ENCODE measurements at regions of chr17 and their contacts with region 1.

Region 1: GRCh38 chr17:38557836-38558727 is 47.7 kb downstream of the SRCIN1 start:
- DNase-seq: peak; percentile 97
- H3K4me3 ChIP-seq: peak overlapping the region; percentile 35 to 55
- H3K27ac ChIP-seq: no peak overlapping the region; a peak in 1 of 4 replicates
- H3K4me1 ChIP-seq: peaks cover 0 to 30% of the 10 kb centered on the region in 2 experiments; a peak in 2 of 4 replicates
- H3K27me3 ChIP-seq: no peaks in the 10 kb centered on the region
- CTCF ChIP-seq: peak; percentile 84
- EP300 ChIP-seq: no peak; a peak in 1 of 4 replicates
- RAD21 ChIP-seq: peak; percentile 83

Region 2: DNA sequence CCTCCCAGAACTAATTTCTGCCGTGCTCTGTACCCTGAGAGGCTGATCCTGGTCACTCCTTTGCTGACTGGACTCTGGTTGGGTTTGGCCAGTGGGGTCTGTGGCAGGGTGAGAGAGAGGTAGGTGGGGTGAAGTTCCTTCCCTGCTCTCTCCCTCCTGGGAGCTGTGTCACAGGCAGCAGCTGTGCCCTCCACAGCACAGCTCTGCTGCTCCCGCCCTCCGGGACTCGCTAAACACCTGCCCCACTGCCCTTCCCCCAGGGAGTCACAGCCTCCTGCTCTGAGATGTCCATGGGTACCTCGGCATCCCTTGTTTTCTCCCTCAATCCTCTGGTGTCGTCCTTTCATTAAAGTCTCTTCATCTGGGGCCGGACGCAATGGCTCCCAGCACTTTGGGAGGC is 18.7 kb before region 1 on chr17:
- CTCF ChIA-PET with region 1: interaction called, 57 read pairs
- POLR2A ChIA-PET with region 1: no interaction called
- DNase-seq: no peak
- H3K4me3 ChIP-seq: no peak overlapping the region
- H3K27ac ChIP-seq: no peak overlapping the region
- H3K4me1 ChIP-seq: no peaks in the 10 kb centered on the region
- H3K27me3 ChIP-seq: no peaks in the 10 kb centered on the region
- CTCF ChIP-seq: no peak
- EP300 ChIP-seq: no peak
- RAD21 ChIP-seq: no peak

Region 3: DNA sequence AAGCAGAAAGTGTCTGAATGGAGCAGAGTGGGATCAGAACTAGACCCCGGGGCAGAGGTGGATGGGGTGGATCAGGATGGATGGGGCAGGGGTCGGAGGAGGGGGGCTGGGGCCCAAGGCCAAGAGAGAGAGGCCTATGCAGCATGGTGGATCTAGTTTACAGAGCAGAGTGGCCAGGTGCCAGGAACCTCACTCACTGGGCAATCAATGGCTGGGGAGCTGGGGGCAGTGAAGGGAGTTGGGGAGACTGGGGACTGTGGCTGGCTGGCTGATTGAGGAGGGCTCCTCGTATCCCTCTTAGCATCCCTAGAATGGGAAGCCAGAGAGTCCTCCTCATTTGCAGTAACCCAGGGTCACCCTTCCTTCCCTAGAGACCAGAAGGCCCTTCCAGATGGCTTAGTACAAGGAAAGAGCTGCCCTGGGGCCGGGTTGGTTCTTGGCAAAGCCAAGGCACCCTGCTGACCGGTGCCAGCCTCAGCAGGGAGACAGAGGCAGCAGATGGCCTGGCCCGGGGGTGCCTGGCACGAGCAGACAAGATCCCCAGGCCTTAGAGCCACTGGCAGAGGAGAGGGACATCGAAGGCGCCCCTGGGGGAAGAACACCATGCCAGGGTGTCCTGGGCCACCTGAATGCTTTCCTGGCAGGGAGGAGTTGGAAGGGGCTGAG is 10.9 kb after region 1 on chr17:
- CTCF ChIA-PET with region 1: interaction called, 30 read pairs
- POLR2A ChIA-PET with region 1: interaction called, 3 read pairs
- DNase-seq: peak; percentile 65
- H3K4me3 ChIP-seq: no peak overlapping the region
- H3K27ac ChIP-seq: peak overlapping the region in 1 of 2 experiments; percentile 11; a peak in 1 of 4 replicates
- H3K4me1 ChIP-seq: peaks cover 0 to 56% of the 10 kb centered on the region in 2 experiments; a peak in 2 of 4 replicates
- H3K27me3 ChIP-seq: peaks cover 31% of the 10 kb centered on the region
- CTCF ChIP-seq: no peak
- EP300 ChIP-seq: peak in 1 of 2 experiments; percentile 27; a peak in 1 of 4 replicates
- RAD21 ChIP-seq: no peak

Region 4: GRCh38 chr17:38584350-38584925 is 26.4 kb after region 1 on chr17:
- CTCF ChIA-PET with region 1: interaction called, 167 read pairs
- POLR2A ChIA-PET with region 1: interaction called, 6 read pairs
- DNase-seq: peak; percentile 86
- H3K4me3 ChIP-seq: peak overlapping the region in 1 of 2 experiments; percentile 21; a peak in 1 of 4 replicates
- H3K27ac ChIP-seq: no peak overlapping the region
- H3K4me1 ChIP-seq: peaks cover 5 to 45% of the 10 kb centered on the region in 2 experiments; a peak in 3 of 4 replicates
- H3K27me3 ChIP-seq: no peaks in the 10 kb centered on the region; the same call in none of the 2 replicates
- CTCF ChIP-seq: peak; percentile 97
- EP300 ChIP-seq: no peak
- RAD21 ChIP-seq: peak; percentile 81

Region 5: GRCh38 chr17:38605888-38606645 is 48.0 kb after region 1 on chr17 and contains the start of gene SRCIN1:
- CTCF ChIA-PET with region 1: interaction called, 88 read pairs
- POLR2A ChIA-PET with region 1: no interaction called
- DNase-seq: peak; percentile 92
- H3K4me3 ChIP-seq: peak within 1 kb of the TSS; percentile 60 to 63
- H3K27ac ChIP-seq: peak within 1 kb of the TSS in 1 of 2 experiments; percentile 83; a peak in 2 of 4 replicates
- H3K4me1 ChIP-seq: peaks cover 0 to 58% of the 10 kb centered on the region in 2 experiments; a peak in 1 of 4 replicates
- H3K27me3 ChIP-seq: no peaks in the 10 kb centered on the region; the same call in 1 of the 2 replicates
- CTCF ChIP-seq: peak; percentile 90
- EP300 ChIP-seq: no peak
- RAD21 ChIP-seq: peak; percentile 50
- polyA plus RNA-seq, gene SRCIN1: 0.45 and 1.0 TPM in 2 replicates

Region 6: GRCh38 chr17:38674749-38675615 is 116.9 kb after region 1 on chr17 and contains the start of gene EPOP:
- CTCF ChIA-PET with region 1: interaction called, 62 read pairs
- POLR2A ChIA-PET with region 1: no interaction called
- DNase-seq: peak; percentile 99
- H3K4me3 ChIP-seq: peak within 1 kb of the TSS; percentile 71 to 77
- H3K27ac ChIP-seq: peak within 1 kb of the TSS in 1 of 2 experiments; percentile 64; a peak in 2 of 4 replicates
- H3K4me1 ChIP-seq: peaks cover 0 to 19% of the 10 kb centered on the region in 2 experiments; a peak in 1 of 4 replicates
- H3K27me3 ChIP-seq: no peaks in the 10 kb centered on the region
- CTCF ChIP-seq: no peak
- EP300 ChIP-seq: no peak
- RAD21 ChIP-seq: no peak
- polyA plus RNA-seq, gene EPOP: 2.7 and 3.1 TPM in 2 replicates

Region 7: DNA sequence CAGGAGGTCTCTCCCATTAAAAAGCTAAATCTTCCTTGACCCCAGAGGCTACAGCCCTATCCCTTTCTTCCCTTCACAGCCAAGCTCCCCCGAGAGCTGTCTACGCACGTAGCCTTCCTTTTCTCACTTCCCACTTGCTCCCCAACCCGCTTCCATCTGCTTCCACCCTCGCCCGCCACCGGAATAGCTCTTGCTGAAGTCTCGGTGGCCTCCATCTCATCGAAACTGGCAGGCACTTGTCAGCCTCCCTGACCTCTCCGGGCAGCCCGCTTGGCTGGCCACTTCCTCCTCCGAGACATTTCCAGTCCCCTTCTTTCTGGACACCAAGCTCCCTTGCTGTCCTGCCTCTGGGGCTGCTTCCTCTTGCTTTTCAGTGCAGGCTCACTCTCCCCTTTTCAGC is 127.4 kb after region 1 on chr17:
- CTCF ChIA-PET with region 1: no interaction called
- POLR2A ChIA-PET with region 1: no interaction called
- DNase-seq: no peak
- H3K4me3 ChIP-seq: no peak overlapping the region
- H3K27ac ChIP-seq: no peak overlapping the region
- H3K4me1 ChIP-seq: no peaks in the 10 kb centered on the region
- H3K27me3 ChIP-seq: no peaks in the 10 kb centered on the region
- CTCF ChIP-seq: no peak
- EP300 ChIP-seq: no peak
- RAD21 ChIP-seq: no peak

Region 8: GRCh38 chr17:38697061-38697820 is 139.2 kb after region 1 on chr17:
- CTCF ChIA-PET with region 1: no interaction called
- POLR2A ChIA-PET with region 1: no interaction called
- DNase-seq: no peak
- H3K4me3 ChIP-seq: no peak overlapping the region
- H3K27ac ChIP-seq: no peak overlapping the region
- H3K4me1 ChIP-seq: peaks cover 13 to 23% of the 10 kb centered on the region in 2 experiments; a peak in 2 of 4 replicates
- H3K27me3 ChIP-seq: no peaks in the 10 kb centered on the region
- CTCF ChIP-seq: no peak
- EP300 ChIP-seq: no peak
- RAD21 ChIP-seq: no peak